MCF 10A (cell line): ENCODE measurements at regions of chr15 and their contacts with region 1.

Region 1: GRCh38 chr15:59372352-59373211 is at the start of gene MYO1E:
- DNase-seq: peak; percentile 98
- H3K4me3 Mint-ChIP-seq: peak within 1 kb of the TSS; percentile 99
- H3K27ac Mint-ChIP-seq: peak within 1 kb of the TSS; percentile 98
- H3K4me1 Mint-ChIP-seq: peaks cover 30% of the 10 kb centered on the region
- H3K27me3 Mint-ChIP-seq: no peaks in the 10 kb centered on the region
- CTCF ChIP-seq: no peak
- total RNA-seq, gene MYO1E: 116 and 121 TPM in 2 replicates

Region 2: GRCh38 chr15:59191855-59192237 is 180.7 kb before region 1 on chr15:
- CTCF ChIA-PET with region 1: no interaction called
- POLR2A ChIA-PET with region 1: no interaction called
- intact Hi-C with region 1: loop called (anchors 5 kb)
- DNase-seq: peak; percentile 96
- H3K4me3 Mint-ChIP-seq: peak overlapping the region; percentile 25
- H3K27ac Mint-ChIP-seq: peak overlapping the region; percentile 61
- H3K4me1 Mint-ChIP-seq: peaks cover 25% of the 10 kb centered on the region
- H3K27me3 Mint-ChIP-seq: no peaks in the 10 kb centered on the region
- CTCF ChIP-seq: no peak

Region 3: GRCh38 chr15:59283717-59284336 is 88.8 kb before region 1 on chr15:
- CTCF ChIA-PET with region 1: interaction called, 3 read pairs
- POLR2A ChIA-PET with region 1: interaction called, 49 read pairs
- intact Hi-C with region 1: loop called (anchors 1 kb)
- DNase-seq: peak; percentile 96
- H3K4me3 Mint-ChIP-seq: peak overlapping the region; percentile 49
- H3K27ac Mint-ChIP-seq: peak overlapping the region; percentile 97
- H3K4me1 Mint-ChIP-seq: peaks cover 34% of the 10 kb centered on the region
- H3K27me3 Mint-ChIP-seq: no peaks in the 10 kb centered on the region
- CTCF ChIP-seq: no peak

Region 4: DNA sequence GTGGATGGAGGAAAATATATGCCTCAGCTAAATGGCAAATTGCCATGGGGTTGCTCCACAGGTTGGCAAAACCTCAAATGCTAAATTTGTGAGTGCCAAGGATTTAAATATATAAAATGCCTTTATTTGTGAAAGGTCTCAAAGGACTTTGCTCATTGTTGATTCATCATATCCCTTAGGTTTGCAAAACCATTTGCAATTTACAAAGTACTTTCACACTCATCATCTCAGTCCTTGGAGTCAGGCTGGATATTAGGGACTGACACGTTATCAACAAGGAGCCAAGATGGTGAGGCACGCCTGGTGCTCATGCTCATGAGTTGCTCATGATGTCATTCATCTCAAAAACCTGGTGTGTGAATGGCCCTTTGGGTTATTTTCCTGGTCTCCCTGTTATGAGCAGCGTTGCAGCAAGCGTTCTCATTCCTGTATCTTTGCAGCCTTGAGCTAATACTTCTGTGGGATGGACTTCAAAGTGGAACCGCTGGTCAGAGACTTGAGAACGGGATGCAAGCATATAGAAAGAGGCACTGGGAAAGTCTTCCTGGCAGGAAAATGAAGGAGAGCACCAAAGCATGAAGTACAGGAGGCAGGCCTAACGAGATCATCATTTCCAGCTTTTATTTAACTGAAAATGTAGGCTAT is 65.9 kb before region 1 on chr15:
- CTCF ChIA-PET with region 1: no interaction called
- POLR2A ChIA-PET with region 1: interaction called, 9 read pairs
- intact Hi-C with region 1: loop called (anchors 2 kb)
- DNase-seq: peak; percentile 89
- H3K4me3 Mint-ChIP-seq: no peak overlapping the region
- H3K27ac Mint-ChIP-seq: no peak overlapping the region
- H3K4me1 Mint-ChIP-seq: peaks cover 28% of the 10 kb centered on the region
- H3K27me3 Mint-ChIP-seq: no peaks in the 10 kb centered on the region
- CTCF ChIP-seq: no peak

Region 5: DNA sequence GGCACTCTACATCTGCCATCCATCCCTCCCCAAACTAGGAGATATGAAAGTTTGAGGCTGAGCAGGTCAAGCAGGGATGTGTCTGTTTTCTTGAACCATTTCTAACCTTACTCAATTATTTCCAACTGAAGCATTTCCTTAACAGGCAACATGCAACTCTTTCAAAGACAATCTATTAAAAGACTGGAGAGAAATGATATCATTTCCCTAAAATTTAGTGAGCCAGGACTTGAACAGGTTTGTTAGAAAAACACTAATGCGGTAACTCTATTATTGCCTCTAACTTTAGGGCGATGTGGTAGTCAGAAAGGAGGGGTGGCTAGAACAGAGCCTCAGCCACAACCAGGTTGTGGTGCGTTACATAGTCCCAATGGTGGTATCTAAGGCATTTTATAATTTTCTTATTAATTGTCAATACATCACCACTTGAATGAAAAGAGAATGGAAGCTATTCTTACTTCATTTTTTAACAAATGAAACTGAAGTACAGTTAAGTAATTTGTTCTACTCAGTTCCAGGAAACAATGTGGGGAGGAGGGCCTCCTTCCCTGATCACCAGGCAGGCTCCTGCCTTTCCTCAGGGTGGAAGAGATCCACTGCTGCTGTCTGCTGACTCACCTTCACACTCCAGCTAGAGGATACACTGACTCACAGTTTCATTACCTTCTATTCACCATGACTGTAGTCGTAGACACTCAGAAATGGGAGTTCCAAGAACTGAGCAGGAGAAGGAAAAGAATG is 22.7 kb before region 1 on chr15:
- CTCF ChIA-PET with region 1: interaction called, 4 read pairs
- POLR2A ChIA-PET with region 1: interaction called, 47 read pairs
- intact Hi-C with region 1: no loop called
- DNase-seq: peak; percentile 94
- H3K4me3 Mint-ChIP-seq: peak overlapping the region; percentile 42
- H3K27ac Mint-ChIP-seq: peak overlapping the region; percentile 92
- H3K4me1 Mint-ChIP-seq: peaks cover 33% of the 10 kb centered on the region
- H3K27me3 Mint-ChIP-seq: no peaks in the 10 kb centered on the region
- CTCF ChIP-seq: no peak

Region 6: DNA sequence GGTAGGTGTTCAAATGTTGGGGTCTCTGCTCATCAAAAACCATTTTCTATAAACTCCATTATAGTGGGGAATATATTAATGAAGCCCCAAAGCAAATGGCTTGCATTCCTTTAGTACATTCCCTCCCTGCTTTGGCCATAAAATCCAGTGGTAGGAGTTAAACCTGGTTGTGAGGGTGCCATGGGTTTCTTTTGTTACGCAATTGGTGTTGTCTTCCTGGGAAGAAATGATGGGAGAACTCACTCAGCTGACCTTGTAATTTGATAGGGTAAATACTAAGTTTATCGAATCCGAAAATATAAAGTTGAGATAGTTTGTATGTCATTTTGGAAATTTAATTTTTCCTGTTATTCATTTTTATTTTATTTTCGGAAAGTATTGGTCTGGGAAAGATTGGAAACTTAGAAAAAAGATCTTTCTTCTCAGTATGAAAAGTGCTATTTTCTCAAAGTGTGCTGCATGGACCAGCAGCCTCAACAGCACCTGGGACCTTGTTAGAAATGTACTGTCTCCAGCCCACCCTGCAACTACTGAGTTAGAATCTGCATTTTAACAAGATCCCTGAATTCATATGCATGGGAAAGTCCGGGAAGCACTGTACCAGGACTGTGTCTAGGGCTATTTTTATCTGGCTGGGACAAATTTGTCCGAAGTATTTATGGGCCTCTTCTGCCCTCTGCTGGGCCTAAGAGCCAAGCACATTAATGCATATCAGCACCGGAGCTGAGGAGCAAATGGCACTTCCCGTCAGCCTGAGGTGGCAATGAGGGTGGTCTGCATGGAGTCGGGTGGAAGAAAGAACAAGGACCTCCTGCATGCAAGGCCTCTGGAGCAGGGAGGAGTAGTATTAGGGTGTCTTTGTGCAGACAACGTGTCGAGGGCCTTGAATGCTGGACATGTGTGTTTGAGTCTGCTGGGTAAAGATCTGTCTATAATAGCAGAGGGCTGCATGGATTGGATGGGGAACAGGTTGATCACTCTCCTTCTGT is 120.1 kb after region 1 on chr15:
- CTCF ChIA-PET with region 1: interaction called, 10 read pairs
- POLR2A ChIA-PET with region 1: interaction called, 5 read pairs
- intact Hi-C with region 1: loop called (anchors 2 kb)
- DNase-seq: peak; percentile 82
- H3K4me3 Mint-ChIP-seq: no peak overlapping the region
- H3K27ac Mint-ChIP-seq: no peak overlapping the region
- H3K4me1 Mint-ChIP-seq: peaks cover 8% of the 10 kb centered on the region
- H3K27me3 Mint-ChIP-seq: no peaks in the 10 kb centered on the region
- CTCF ChIP-seq: peak; percentile 84